ENCODE measurements at regions of chr16 and their contacts with region 1.

Region 1: GRCh38 chr16:24975428-24975889 is 39.7 kb downstream of the ARHGAP17 start:
- DNase-seq: peak; percentile 57

Region 2: GRCh38 chr16:25014500-25015147 is 39.2 kb after region 1 on chr16:
- intact Hi-C with region 1: loop called (anchors 5 kb)
- DNase-seq: peak; percentile 83

Region 3: DNA sequence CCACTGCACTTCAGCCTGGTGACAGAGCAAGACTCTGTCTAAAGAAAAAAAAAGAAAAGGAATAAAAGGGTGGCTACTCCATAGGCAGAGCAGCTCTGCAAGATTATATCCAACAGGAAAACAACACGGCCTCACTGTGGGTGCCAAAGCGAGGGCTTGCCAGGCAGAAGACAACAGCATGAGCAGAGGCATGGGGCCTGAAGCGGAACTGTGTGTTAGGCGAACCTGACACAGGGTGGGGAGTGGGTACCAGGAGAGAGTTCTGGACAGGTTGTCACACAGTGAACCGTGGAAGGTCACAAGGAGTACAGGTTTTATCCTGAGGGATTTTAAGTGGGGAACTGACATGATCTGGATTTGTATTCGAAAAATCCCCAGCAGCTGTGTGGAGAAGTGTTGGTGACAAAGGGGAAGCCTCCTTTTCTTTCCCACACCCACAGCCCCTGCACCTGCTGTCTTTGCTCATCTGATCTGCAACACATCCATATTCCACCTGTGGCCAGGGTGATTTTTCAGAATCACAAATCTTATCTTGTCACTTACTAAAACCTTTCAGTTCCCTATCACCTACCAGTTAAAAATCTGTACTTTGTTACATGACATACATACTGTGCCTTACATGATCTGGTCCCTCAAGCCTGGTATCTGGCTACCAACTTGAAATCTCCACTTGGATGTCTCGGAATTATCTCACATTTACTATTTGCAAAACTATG is 62.9 kb after region 1 on chr16:
- intact Hi-C with region 1: no loop called
- DNase-seq: no peak

Region 4: GRCh38 chr16:25051406-25052150 is 76.1 kb after region 1 on chr16:
- intact Hi-C with region 1: no loop called
- DNase-seq: no peak

Measured in cardiac septum (tissue), 1 donor.